Sigmoid colon (tissue), 7 donors: ENCODE measurements at regions of chr5 and their contacts with region 1.

Region 1: DNA sequence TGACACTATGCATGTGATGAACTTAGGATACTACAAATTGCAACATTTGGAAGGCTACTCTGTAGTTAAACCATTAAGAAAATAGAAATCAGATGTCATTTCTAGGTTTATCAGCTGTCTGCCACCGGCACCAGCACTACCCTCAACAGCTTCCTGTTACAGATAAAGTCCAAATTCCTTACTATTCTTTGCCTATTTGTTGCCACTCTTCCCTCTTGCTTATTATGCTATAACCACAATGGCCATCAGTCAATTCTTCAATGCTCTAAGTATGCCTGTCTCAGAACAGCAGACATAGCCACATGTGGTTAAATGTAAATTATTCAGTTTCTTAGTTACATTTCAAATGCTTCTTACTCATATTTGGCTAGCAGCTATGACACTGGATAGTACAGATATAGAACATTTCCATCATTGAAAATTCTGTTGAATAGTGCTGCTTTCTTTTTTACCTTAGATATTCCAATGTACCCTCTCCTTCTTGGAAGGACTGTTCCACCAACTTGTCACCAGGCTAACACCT is 21.0 kb downstream of the DHX29 start:
- DNase-seq: no peak
- H3K4me3 ChIP-seq: no peak overlapping the region
- H3K27ac ChIP-seq: no peak overlapping the region
- H3K4me1 ChIP-seq: no peaks in the 10 kb centered on the region
- H3K27me3 ChIP-seq: no peaks in the 10 kb centered on the region
- CTCF ChIP-seq: no peak
- EP300 ChIP-seq: no peak
- POLR2A ChIP-seq: no peak

Region 2: GRCh38 chr5:54861212-54861894 is 425.1 kb before region 1 on chr5:
- intact Hi-C with region 1: no loop called
- DNase-seq: no peak
- H3K4me3 ChIP-seq: no peak overlapping the region
- H3K27ac ChIP-seq: peak overlapping the region in 1 of 4 donors; percentile 61
- H3K4me1 ChIP-seq: peaks cover 0 to 10% (median 0%) of the 10 kb centered on the region in 4 donors
- H3K27me3 ChIP-seq: no peaks in the 10 kb centered on the region
- CTCF ChIP-seq: no peak
- EP300 ChIP-seq: no peak
- POLR2A ChIP-seq: no peak

Region 3: GRCh38 chr5:55123365-55123764 is 163.1 kb before region 1 on chr5:
- intact Hi-C with region 1: no loop called
- DNase-seq: no peak
- H3K4me3 ChIP-seq: no peak overlapping the region
- H3K27ac ChIP-seq: no peak overlapping the region
- H3K4me1 ChIP-seq: no peaks in the 10 kb centered on the region
- H3K27me3 ChIP-seq: no peaks in the 10 kb centered on the region
- CTCF ChIP-seq: no peak
- EP300 ChIP-seq: no peak
- POLR2A ChIP-seq: no peak

Region 4: DNA sequence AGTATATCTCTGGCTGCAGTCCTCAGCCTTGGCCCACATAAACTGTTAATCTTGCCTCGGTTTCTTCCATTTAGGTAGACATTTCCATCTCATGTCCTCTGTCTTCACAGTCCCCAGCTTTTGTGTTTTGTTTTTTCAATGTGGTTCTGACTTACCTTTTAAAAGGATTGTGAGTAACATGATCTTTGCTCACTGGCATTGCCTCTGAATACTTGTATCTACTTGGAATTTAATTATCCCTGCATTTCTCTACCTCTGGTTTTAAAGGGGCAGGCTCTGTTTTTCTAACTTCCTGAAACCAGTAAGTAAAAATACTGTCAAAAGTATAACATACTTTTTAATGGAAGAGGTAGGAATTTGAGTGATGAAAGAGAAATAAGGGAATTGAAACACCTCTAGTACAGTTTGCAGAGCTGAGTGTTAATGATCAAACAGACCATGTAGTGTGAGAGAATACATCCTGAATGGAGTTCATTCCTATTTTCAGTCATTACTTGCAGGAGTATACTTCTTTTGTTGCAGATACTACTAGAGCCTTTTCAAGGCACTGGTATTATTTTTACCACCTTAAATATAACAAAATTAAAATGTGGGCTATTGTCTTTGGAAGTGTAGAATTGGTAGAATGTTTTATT is 83.9 kb after region 1 on chr5:
- intact Hi-C with region 1: no loop called
- DNase-seq: no peak
- H3K4me3 ChIP-seq: no peak overlapping the region
- H3K27ac ChIP-seq: no peak overlapping the region
- H3K4me1 ChIP-seq: no peaks in the 10 kb centered on the region
- H3K27me3 ChIP-seq: no peaks in the 10 kb centered on the region
- CTCF ChIP-seq: no peak
- EP300 ChIP-seq: no peak
- POLR2A ChIP-seq: no peak

Region 5: GRCh38 chr5:55577353-55578060 is 291.0 kb after region 1 on chr5:
- intact Hi-C with region 1: no loop called
- DNase-seq: peak; percentile 82
- H3K4me3 ChIP-seq: no peak overlapping the region
- H3K27ac ChIP-seq: peak overlapping the region; percentile 42 to 81 (median 65)
- H3K4me1 ChIP-seq: peaks cover 0 to 30% (median 22%) of the 10 kb centered on the region in 4 donors
- H3K27me3 ChIP-seq: no peaks in the 10 kb centered on the region
- CTCF ChIP-seq: no peak
- EP300 ChIP-seq: no peak
- POLR2A ChIP-seq: no peak

Region 6: DNA sequence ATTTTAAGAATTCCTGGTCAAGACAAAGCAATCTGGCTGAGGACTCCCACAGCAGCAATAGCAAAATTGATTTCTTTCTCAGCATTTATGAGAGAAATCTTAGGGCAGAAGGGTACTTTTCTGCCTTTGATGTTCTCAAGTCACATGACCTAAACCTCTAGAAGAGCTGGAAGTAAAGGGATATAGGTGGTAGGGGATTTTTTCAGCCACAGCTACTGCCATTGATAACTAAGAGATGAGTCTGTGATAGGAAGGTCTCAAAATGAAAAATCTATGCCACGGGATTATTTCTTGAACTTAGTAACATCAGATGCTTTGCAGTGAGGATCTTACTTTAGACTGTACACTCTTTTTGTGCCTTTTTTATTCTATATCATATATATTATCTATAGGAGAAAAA is 672.7 kb after region 1 on chr5:
- intact Hi-C with region 1: loop called (anchors 10 kb)
- DNase-seq: no peak
- H3K4me3 ChIP-seq: no peak overlapping the region
- H3K27ac ChIP-seq: no peak overlapping the region
- H3K4me1 ChIP-seq: no peaks in the 10 kb centered on the region
- H3K27me3 ChIP-seq: no peaks in the 10 kb centered on the region
- CTCF ChIP-seq: no peak
- EP300 ChIP-seq: no peak
- POLR2A ChIP-seq: no peak